ENCODE measurements at regions of chr1 and their contacts with region 1.

Region 1: GRCh38 chr1:206912445-206913095 is 9.2 kb downstream of the FCMR start:
- DNase-seq: peak in 11 of 14 experiments; percentile 34 to 86 (median 56)
- ATAC-seq: peak; percentile 38
- H3K4me3 ChIP-seq: no peak overlapping the region
- H3K4me3 Mint-ChIP-seq: peak overlapping the region; percentile 79
- H3K27ac ChIP-seq: peak overlapping the region in 1 of 2 donors; percentile 39
- H3K27ac Mint-ChIP-seq: no peak overlapping the region
- H3K4me1 ChIP-seq: peaks cover 97% of the 10 kb centered on the region
- H3K4me1 Mint-ChIP-seq: peaks cover 92% of the 10 kb centered on the region
- H3K27me3 ChIP-seq: no peaks in the 10 kb centered on the region
- H3K27me3 Mint-ChIP-seq: no peaks in the 10 kb centered on the region
- CTCF ChIP-seq: peak; percentile 89

Region 2: DNA sequence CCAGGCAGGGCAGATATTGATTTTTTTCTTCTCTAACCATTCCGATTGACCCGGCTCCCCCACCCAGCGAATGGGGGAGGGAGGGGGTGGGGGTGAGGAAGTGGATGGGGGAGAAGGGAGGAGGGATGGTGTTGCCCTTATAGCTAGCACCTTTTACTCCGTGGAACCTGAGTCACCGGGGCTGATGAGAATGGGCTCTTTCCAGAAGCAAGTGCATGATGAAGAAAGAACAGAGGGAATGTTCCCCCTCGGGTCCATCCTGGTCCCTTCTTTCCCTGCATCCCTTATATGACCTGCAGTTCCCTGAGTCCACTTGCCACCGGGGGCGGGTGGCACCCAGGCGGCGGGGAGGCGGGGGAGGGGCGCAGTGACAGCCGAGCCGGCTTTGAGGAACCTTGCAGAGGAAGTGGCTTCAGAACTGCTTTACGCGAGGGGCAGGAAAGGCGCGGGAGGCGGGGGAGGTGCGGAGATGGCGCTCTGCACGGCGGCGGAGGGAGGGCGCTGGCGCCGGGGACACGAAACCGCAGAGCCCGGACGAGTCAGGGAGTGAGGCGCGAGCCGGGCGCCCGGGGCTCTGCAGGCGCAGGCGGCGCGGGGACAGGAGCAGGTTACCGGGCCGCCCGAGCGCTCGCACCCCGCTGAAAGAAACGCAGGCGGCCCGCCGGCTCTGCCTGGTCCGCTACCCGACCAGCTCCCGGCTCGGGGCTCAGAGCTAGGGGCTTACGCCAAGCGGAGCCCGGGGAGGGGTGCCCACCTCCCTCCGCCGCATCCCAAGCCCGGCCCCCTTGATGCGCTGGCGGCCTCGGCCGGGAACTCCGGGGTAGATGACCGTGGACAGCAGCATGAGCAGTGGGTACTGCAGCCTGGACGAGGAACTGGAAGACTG is 355.6 kb before region 1 on chr1:
- CTCF ChIA-PET with region 1: no interaction called
- POLR2A ChIA-PET with region 1: interaction called, 3 read pairs
- intact Hi-C with region 1: loop called in 1 of 2 experiments (anchors 5 kb)
- DNase-seq: peak; percentile 72 to 96 (median 90)
- ATAC-seq: peak; percentile 69
- H3K4me3 ChIP-seq: peak overlapping the region; percentile 94
- H3K4me3 Mint-ChIP-seq: peak overlapping the region; percentile 97
- H3K27ac ChIP-seq: peak overlapping the region; percentile 69 to 99
- H3K27ac Mint-ChIP-seq: peak overlapping the region; percentile 86
- H3K4me1 ChIP-seq: peaks cover 77% of the 10 kb centered on the region
- H3K4me1 Mint-ChIP-seq: peaks cover 86% of the 10 kb centered on the region
- H3K27me3 ChIP-seq: no peaks in the 10 kb centered on the region
- H3K27me3 Mint-ChIP-seq: no peaks in the 10 kb centered on the region
- CTCF ChIP-seq: no peak

Region 3: DNA sequence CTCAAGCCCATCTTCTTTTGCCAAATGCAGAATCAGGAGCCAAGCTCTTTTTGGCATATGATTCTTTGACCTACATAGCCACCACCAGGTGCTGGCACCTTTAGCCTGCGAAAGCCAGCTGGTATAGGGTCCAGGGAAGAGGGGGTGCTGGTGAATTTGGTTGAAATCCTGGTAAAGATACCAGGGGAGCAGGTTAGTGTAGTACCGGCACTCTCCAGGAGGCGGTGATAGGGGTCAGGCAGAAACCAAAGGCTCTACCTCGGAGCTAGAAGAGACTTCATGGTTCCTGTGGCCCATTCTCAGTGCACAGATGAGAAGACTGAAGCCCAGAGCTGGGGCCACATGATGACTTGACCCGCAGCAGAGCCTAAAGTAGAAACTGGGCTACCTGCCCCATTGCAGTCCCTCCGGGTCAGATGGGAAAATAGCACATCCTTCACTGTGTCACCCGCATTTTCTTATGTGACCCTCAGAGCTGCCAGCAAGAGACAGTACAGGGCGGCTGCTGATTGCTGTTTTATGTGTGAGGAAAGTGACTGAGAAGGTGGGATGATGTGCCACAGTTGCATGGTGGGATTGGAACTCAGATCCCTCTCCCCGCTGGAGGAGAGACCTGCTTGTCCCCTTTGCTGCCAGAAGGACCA is 177.9 kb before region 1 on chr1:
- CTCF ChIA-PET with region 1: interaction called, 32 read pairs
- POLR2A ChIA-PET with region 1: interaction called, 51 read pairs
- intact Hi-C with region 1: loop called (anchors 1 kb)
- DNase-seq: peak; percentile 71 to 91 (median 82)
- ATAC-seq: peak; percentile 68
- H3K4me3 ChIP-seq: no peak overlapping the region
- H3K4me3 Mint-ChIP-seq: peak overlapping the region; percentile 6
- H3K27ac ChIP-seq: peak overlapping the region; percentile 19 to 37
- H3K27ac Mint-ChIP-seq: peak overlapping the region; percentile 90
- H3K4me1 ChIP-seq: peaks cover 57% of the 10 kb centered on the region
- H3K4me1 Mint-ChIP-seq: peaks cover 55% of the 10 kb centered on the region
- H3K27me3 ChIP-seq: no peaks in the 10 kb centered on the region
- H3K27me3 Mint-ChIP-seq: no peaks in the 10 kb centered on the region
- CTCF ChIP-seq: peak; percentile 95

Region 4: DNA sequence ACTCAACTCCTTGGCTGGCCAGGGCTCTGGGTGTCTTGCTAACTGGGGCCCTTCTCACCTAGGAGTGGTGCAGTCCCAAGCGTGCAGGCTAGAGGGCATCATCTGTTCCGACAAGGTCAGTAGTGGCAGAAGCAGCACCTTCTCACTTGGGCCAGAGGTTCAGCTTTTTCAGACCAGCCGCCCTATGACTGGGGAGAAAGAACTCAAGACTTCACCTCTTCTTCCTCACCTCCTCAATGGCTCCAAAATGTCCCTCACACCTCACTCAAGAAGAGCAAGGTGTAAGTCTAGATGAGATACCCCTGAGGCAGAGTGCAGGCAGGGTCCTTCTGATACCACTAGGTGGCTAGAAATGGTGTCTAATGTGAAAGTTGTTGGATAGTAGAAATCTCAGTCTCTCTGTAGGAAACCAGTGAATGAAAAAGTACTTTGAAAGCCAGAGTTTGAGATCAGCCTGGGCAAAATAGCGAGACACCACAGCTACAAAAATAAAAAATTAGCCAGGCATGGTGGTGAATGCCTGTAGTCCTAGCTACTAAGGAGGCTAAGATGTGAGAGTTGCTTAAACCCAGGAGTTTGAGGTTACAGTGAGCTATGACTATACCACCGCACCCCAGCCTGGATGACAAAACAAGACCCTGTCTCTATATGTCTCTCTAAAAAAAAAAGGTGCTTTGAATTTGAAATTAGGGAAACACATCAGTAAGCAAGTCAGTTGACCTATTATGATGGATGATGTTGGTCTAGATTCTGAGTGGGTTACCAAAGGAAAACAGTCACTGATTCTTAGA is 55.7 kb before region 1 on chr1:
- CTCF ChIA-PET with region 1: interaction called, 6 read pairs
- POLR2A ChIA-PET with region 1: interaction called, 8 read pairs
- intact Hi-C with region 1: loop called in 1 of 2 experiments (anchors 2 kb)
- DNase-seq: peak in 5 of 14 experiments; percentile 3 to 44 (median 26)
- ATAC-seq: peak; percentile 64
- H3K4me3 ChIP-seq: no peak overlapping the region
- H3K4me3 Mint-ChIP-seq: no peak overlapping the region
- H3K27ac ChIP-seq: no peak overlapping the region
- H3K27ac Mint-ChIP-seq: no peak overlapping the region
- H3K4me1 ChIP-seq: peaks cover 11% of the 10 kb centered on the region
- H3K4me1 Mint-ChIP-seq: peaks cover 22% of the 10 kb centered on the region
- H3K27me3 ChIP-seq: peaks cover 0 to 2% of the 10 kb centered on the region in 2 experiments
- H3K27me3 Mint-ChIP-seq: no peaks in the 10 kb centered on the region
- CTCF ChIP-seq: peak; percentile 47

Region 5: GRCh38 chr1:206925106-206925736 is 12.7 kb after region 1 on chr1:
- CTCF ChIA-PET with region 1: interaction called, 22 read pairs
- POLR2A ChIA-PET with region 1: interaction called, 384 read pairs
- intact Hi-C with region 1: loop called (anchors 1 to 2 kb)
- DNase-seq: peak in 9 of 14 experiments; percentile 41 to 85 (median 56)
- ATAC-seq: no peak
- H3K4me3 ChIP-seq: no peak overlapping the region
- H3K4me3 Mint-ChIP-seq: no peak overlapping the region
- H3K27ac ChIP-seq: peak overlapping the region; percentile 57 to 95
- H3K27ac Mint-ChIP-seq: no peak overlapping the region
- H3K4me1 ChIP-seq: peaks cover 56% of the 10 kb centered on the region
- H3K4me1 Mint-ChIP-seq: peaks cover 40% of the 10 kb centered on the region
- H3K27me3 ChIP-seq: no peaks in the 10 kb centered on the region
- H3K27me3 Mint-ChIP-seq: no peaks in the 10 kb centered on the region
- CTCF ChIP-seq: no peak

Region 6: DNA sequence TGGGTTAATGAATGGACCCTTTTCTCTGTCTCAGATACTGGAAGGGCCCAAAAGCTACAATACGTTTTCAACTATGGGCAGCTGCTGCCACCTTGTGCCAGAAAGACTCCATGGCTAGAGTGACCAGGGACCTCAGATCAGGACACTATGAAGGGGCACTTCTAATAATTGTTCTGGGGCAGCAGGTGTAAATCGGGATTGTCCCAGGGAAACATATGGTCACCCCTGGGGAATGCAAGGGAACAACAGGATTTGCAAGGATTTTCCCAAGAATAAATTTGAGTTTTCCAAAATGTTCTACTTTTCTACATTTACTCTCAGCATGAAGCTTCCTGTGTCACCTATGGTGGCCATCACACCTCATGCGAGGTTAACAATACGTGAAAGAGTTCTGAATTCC is 69.6 kb after region 1 on chr1:
- CTCF ChIA-PET with region 1: interaction called, 5 read pairs
- POLR2A ChIA-PET with region 1: interaction called, 10 read pairs
- intact Hi-C with region 1: loop called (anchors 2 kb)
- DNase-seq: peak; percentile 48 to 77 (median 59)
- ATAC-seq: peak; percentile 81
- H3K4me3 ChIP-seq: no peak overlapping the region
- H3K4me3 Mint-ChIP-seq: no peak overlapping the region
- H3K27ac ChIP-seq: no peak overlapping the region
- H3K27ac Mint-ChIP-seq: no peak overlapping the region
- H3K4me1 ChIP-seq: no peaks in the 10 kb centered on the region
- H3K4me1 Mint-ChIP-seq: no peaks in the 10 kb centered on the region
- H3K27me3 ChIP-seq: peaks cover 6 to 12% of the 10 kb centered on the region in 2 experiments
- H3K27me3 Mint-ChIP-seq: peaks cover 18% of the 10 kb centered on the region
- CTCF ChIP-seq: peak; percentile 88

Region 7: GRCh38 chr1:206992790-206993189 is 80.2 kb after region 1 on chr1:
- CTCF ChIA-PET with region 1: no interaction called
- POLR2A ChIA-PET with region 1: no interaction called
- intact Hi-C with region 1: no loop called
- DNase-seq: no peak
- ATAC-seq: no peak
- H3K4me3 ChIP-seq: no peak overlapping the region
- H3K4me3 Mint-ChIP-seq: no peak overlapping the region
- H3K27ac ChIP-seq: no peak overlapping the region
- H3K27ac Mint-ChIP-seq: no peak overlapping the region
- H3K4me1 ChIP-seq: no peaks in the 10 kb centered on the region
- H3K4me1 Mint-ChIP-seq: no peaks in the 10 kb centered on the region
- H3K27me3 ChIP-seq: peaks cover 0 to 17% of the 10 kb centered on the region in 2 experiments
- H3K27me3 Mint-ChIP-seq: peaks cover 27% of the 10 kb centered on the region
- CTCF ChIP-seq: no peak

Region 8: GRCh38 chr1:207227131-207227630 is 314.6 kb after region 1 on chr1:
- CTCF ChIA-PET with region 1: no interaction called
- POLR2A ChIA-PET with region 1: no interaction called
- intact Hi-C with region 1: no loop called
- DNase-seq: no peak
- ATAC-seq: no peak
- H3K4me3 ChIP-seq: no peak overlapping the region
- H3K4me3 Mint-ChIP-seq: no peak overlapping the region
- H3K27ac ChIP-seq: no peak overlapping the region
- H3K27ac Mint-ChIP-seq: no peak overlapping the region
- H3K4me1 ChIP-seq: no peaks in the 10 kb centered on the region
- H3K4me1 Mint-ChIP-seq: no peaks in the 10 kb centered on the region
- H3K27me3 ChIP-seq: no peaks in the 10 kb centered on the region
- H3K27me3 Mint-ChIP-seq: no peaks in the 10 kb centered on the region
- CTCF ChIP-seq: no peak